Left cardiac atrium (tissue), 4 donors: ENCODE measurements at regions of chr3 and their contacts with region 1.

Region 1: GRCh38 chr3:25427942-25428788 is at the start of gene RARB:
- DNase-seq: peak; percentile 68
- ATAC-seq: peak; percentile 88 to 93
- total RNA-seq, gene RARB: 12.1 to 24.1 TPM

Region 2: DNA sequence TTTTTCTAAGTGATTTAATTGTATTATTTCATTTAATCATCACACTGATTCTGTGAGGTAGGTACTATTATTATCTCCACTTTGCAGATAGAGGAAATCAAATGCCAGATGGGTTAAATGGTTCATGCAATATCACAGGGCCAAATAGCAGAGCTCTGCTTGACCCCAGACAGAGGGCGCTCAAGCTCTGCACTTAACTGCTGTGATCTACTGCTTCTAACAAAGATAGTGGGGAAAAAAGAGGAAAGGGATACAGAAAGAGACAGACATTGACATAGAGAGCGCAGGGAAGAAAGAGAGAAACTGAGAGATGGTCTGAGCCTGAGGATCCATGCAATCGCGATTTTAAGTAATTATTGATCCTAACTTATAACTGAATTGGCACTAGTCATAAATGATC is 654.4 kb before region 1 on chr3:
- intact Hi-C with region 1: loop called in 1 of 2 experiments (anchors 10 kb)
- DNase-seq: peak; percentile 48
- ATAC-seq: peak; percentile 74 to 82

Region 3: GRCh38 chr3:25033407-25034029 is 394.6 kb before region 1 on chr3:
- intact Hi-C with region 1: loop called (anchors 10 kb)
- DNase-seq: peak; percentile 52
- ATAC-seq: peak; percentile 77 to 86

Region 4: GRCh38 chr3:25110642-25111041 is 317.5 kb before region 1 on chr3:
- intact Hi-C with region 1: loop called in 1 of 2 experiments (anchors 10 kb)
- DNase-seq: no peak
- ATAC-seq: no peak

Region 5: GRCh38 chr3:25235031-25235430 is 193.1 kb before region 1 on chr3:
- intact Hi-C with region 1: no loop called
- DNase-seq: no peak
- ATAC-seq: no peak